ENCODE measurements at regions of chr9 and their contacts with region 1.

Region 1: DNA sequence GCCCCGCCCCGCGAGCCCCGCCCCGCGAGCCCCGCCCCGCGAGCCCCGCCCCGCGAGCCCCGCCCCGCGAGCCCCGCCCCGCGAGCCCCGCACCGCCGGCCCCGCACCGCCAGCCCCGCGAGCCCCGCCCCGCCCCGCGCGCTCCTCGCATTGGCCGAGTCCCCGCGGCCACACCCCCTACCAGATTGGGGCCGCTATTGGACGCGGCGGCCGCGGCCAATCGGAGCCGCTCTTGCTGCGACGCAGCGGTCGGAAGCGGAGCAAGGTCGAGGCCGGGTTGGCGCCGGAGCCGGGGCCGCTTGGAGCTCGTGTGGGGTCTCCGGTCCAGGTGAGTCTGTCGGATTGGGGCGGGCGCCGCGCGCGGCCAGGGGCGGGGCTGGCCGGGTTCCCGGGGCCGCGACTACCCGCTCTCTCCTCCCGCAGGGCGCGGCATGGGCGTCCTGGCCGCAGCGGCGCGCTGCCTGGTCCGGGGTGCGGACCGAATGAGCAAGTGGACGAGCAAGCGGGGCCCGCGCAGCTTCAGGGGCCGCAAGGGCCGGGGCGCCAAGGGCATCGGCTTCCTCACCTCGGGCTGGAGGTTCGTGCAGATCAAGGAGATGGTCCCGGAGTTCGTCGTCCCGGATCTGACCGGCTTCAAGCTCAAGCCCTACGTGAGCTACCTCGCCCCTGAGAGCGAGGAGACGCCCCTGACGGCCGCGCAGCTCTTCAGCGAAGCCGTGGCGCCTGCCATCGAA is at the start of gene MRPL41:
- DNase-seq: peak; percentile 88
- H3K4me3 Mint-ChIP-seq: peak within 1 kb of the TSS; percentile 78
- H3K27ac Mint-ChIP-seq: peak within 1 kb of the TSS; percentile 49
- H3K4me1 Mint-ChIP-seq: peaks cover 5% of the 10 kb centered on the region
- H3K27me3 Mint-ChIP-seq: no peaks in the 10 kb centered on the region
- CTCF ChIP-seq: no peak
- total RNA-seq, gene MRPL41: 37.6 and 43.0 TPM in 2 replicates

Region 2: DNA sequence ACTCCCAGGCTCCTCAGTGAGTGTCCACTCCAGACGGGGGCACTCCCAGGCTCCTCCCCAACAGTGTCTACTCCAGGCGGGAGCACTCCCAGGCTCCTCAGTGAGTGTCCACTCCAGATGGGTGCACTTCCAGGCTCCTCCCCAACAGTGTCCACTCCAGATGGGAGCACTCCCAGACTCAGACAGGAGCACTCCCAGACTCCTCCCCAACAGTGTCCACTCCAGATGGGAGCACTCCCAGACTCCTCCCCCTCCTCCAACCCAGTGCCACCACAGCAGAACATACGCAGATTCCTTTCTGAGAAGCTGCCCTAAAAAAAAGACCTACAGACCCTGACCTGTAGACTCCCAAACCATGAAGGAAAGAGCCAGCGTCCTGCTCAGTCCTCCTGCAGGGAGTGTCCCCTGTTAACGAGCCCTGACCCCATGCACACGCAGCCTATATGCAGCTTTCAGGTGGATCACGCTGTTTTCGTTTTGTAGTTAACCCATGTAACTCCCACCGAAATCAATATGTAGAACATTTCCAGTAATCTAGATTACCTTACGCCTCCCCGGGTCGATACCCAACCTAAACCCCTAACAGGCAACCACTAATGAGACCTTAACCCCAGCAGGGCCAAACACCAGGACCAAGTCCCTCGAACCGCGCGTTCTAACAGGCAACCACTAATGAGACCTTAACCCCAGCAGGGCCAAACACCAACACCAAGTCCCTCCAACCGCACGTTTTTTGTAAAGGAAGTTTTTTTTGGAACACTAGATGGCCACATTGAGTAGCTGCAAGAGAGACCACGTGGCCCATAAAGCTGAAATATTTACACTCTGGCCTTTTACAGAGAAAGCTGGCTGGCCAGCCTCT is 17.3 kb before region 1 on chr9:
- CTCF ChIA-PET with region 1: interaction called, 13 read pairs
- POLR2A ChIA-PET with region 1: interaction called, 10 read pairs
- intact Hi-C with region 1: no loop called
- DNase-seq: peak; percentile 69
- H3K4me3 Mint-ChIP-seq: no peak overlapping the region
- H3K27ac Mint-ChIP-seq: no peak overlapping the region
- H3K4me1 Mint-ChIP-seq: peaks cover 7% of the 10 kb centered on the region
- H3K27me3 Mint-ChIP-seq: no peaks in the 10 kb centered on the region
- CTCF ChIP-seq: peak; percentile 50

Region 3: DNA sequence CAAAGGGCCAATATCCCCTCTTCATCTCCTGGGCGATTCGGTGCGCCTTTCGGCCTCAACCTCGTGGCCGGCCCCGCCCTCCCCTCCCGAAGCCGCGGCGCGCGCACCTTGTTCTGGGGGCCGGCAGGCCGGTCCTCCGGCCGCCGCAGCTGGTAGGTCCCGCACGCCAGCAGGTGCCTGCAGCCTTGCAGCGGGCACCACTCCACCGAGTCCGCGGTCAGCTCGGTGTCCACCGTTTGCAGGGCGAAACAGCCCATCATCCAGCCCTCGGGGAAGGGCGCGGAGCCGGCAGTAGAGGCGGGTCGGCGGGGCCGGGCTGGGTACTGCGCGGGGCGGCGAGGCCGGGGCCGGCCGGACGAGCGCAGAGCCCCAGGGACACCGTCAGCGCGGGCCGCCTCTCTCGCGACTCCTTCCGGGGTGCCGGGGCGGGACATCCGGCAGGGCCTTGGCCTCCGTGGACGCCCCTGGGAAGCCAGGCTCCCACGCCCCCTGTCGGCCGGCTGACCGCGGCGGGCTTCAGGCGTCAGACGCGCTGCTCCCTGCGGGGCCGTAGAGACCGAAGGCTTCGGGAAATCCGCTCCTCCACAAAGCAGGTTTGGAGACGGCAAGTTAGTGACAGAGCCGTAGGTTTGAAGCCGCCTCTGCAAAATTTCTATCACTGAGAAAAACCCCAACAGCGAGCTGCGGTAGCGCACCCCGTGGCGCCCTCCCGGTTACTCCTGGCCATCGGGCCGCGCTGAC is 26.9 kb after region 1 on chr9 and contains the start of gene DPH7:
- CTCF ChIA-PET with region 1: interaction called, 6 read pairs
- POLR2A ChIA-PET with region 1: interaction called, 33 read pairs
- intact Hi-C with region 1: loop called (anchors 2 kb)
- DNase-seq: peak; percentile 92
- H3K4me3 Mint-ChIP-seq: peak within 1 kb of the TSS; percentile 81
- H3K27ac Mint-ChIP-seq: peak within 1 kb of the TSS; percentile 88
- H3K4me1 Mint-ChIP-seq: peaks cover 8% of the 10 kb centered on the region
- H3K27me3 Mint-ChIP-seq: no peaks in the 10 kb centered on the region
- CTCF ChIP-seq: peak; percentile 87
- total RNA-seq, gene DPH7: 45.7 and 46.4 TPM in 2 replicates

Region 4: DNA sequence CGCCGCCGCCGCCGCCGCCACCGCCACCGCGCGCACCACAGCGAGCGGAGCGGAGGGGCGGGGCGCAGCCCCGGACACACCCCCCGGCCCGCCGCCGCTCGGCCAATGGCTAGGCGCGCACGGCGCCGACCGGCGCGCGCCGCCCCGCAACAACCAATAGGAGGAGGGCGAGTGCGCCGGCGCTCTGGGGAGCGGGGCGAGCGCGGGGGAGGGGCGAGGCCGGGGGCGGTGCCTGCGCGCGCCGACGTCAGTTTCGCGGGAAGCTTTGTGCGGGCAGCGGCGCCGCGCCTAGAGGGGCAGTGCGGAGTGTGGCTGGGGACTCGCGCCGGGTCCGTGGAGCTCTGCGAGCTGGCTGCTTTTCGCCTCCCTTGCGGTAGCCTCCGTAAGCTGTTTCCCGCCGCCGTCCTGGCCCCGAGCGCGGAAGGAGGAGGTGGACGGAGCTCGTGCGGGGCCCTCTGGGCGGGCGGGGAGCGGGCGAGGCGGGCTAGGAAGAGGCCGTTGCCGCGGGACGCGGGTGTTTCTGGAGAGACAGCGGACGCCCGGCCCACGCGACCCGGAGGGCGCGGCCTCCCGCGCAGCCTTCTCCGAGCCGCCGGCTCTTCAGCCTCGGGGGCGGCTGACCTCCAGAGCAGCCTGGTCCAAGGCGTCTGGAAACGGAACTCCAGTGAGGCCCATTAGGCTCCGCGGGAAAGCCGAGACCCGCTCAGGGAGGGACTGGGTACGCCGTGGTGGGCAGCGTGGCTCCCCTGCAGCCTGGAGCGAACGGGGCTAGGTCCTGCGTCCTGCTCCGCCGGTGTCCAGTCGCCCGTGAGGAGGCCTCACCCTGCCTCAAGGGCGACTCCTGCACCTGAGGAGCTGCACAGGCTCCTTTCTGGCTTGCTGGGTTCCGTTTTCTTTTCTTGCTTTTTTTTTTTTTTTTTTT is 38.9 kb after region 1 on chr9 and contains the start of gene ZMYND19:
- CTCF ChIA-PET with region 1: no interaction called
- POLR2A ChIA-PET with region 1: interaction called, 14 read pairs
- intact Hi-C with region 1: no loop called
- DNase-seq: peak; percentile 87
- H3K4me3 Mint-ChIP-seq: peak within 1 kb of the TSS; percentile 79
- H3K27ac Mint-ChIP-seq: peak within 1 kb of the TSS; percentile 70
- H3K4me1 Mint-ChIP-seq: no peaks in the 10 kb centered on the region
- H3K27me3 Mint-ChIP-seq: no peaks in the 10 kb centered on the region
- CTCF ChIP-seq: no peak
- total RNA-seq, gene ZMYND19: 42.9 and 51.9 TPM in 2 replicates

Region 5: DNA sequence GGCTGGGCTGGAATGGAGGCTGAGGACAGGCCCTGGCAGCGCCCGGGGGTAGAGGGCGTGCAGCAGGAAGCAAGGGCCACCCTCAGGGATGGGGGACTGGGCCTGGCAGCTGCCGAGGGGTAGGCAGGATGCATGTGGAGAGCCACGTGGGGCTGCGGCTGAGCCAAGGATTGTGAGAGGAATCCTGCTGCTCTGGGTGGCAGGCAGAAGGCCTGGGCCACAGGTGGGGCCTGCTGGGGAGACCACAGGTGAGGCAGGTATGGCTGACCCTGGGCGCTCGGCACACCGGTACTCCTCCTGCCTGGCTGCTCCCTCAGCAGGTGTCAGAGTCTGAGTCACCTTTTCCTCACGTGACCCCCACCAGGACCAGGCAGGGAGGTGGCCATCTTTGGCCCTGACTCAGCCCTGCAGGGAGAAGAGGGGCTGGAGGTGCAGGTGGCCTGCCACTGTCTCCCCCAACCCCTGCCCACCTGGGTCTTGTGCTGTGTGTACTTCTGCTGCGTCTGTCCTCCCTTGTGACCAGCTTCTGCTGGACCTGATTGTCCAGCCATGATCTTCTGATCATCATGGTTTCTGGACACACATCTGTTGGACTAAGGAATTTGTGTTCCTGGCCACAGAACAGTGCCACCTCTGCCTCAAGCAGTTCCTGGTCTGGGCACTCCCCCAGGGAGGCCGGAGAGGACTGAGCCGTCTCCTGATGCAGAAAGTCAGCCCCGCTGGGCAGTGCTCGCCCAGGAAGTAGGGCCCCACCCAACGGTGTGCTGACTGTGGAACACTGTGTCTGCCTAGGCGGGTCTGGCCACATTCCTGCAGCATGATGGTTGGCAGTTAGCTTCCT is 60.0 kb after region 1 on chr9:
- CTCF ChIA-PET with region 1: no interaction called
- POLR2A ChIA-PET with region 1: interaction called, 13 read pairs
- intact Hi-C with region 1: loop called (anchors 10 kb)
- DNase-seq: peak; percentile 94
- H3K4me3 Mint-ChIP-seq: peak overlapping the region; percentile 72
- H3K27ac Mint-ChIP-seq: peak overlapping the region; percentile 96
- H3K4me1 Mint-ChIP-seq: peaks cover 32% of the 10 kb centered on the region
- H3K27me3 Mint-ChIP-seq: no peaks in the 10 kb centered on the region
- CTCF ChIP-seq: no peak

Region 6: GRCh38 chr9:137618105-137619067 is 66.6 kb after region 1 on chr9 and contains the start of gene EHMT1:
- CTCF ChIA-PET with region 1: no interaction called
- POLR2A ChIA-PET with region 1: interaction called, 7 read pairs
- intact Hi-C with region 1: loop called (anchors 10 kb)
- DNase-seq: peak; percentile 83
- H3K4me3 Mint-ChIP-seq: peak within 1 kb of the TSS; percentile 95
- H3K27ac Mint-ChIP-seq: peak within 1 kb of the TSS; percentile 91
- H3K4me1 Mint-ChIP-seq: peaks cover 15% of the 10 kb centered on the region
- H3K27me3 Mint-ChIP-seq: no peaks in the 10 kb centered on the region
- CTCF ChIP-seq: no peak
- total RNA-seq, gene EHMT1: 77.2 and 79.7 TPM in 2 replicates